Panc1 (cell line): ENCODE measurements at regions of chr11 and their contacts with region 1.

Region 1: GRCh38 chr11:74581954-74582547 is 10.3 kb upstream of the POLD3 start:
- DNase-seq: no peak
- ATAC-seq: peak; percentile 45; the same call in 1 of the 2 replicates
- H3K4me3 ChIP-seq: no peak overlapping the region
- H3K27ac ChIP-seq: no peak overlapping the region
- H3K4me1 ChIP-seq: no peaks in the 10 kb centered on the region
- H3K27me3 ChIP-seq: no peaks in the 10 kb centered on the region; the same call in 1 of the 2 replicates
- CTCF ChIP-seq: no peak

Region 2: DNA sequence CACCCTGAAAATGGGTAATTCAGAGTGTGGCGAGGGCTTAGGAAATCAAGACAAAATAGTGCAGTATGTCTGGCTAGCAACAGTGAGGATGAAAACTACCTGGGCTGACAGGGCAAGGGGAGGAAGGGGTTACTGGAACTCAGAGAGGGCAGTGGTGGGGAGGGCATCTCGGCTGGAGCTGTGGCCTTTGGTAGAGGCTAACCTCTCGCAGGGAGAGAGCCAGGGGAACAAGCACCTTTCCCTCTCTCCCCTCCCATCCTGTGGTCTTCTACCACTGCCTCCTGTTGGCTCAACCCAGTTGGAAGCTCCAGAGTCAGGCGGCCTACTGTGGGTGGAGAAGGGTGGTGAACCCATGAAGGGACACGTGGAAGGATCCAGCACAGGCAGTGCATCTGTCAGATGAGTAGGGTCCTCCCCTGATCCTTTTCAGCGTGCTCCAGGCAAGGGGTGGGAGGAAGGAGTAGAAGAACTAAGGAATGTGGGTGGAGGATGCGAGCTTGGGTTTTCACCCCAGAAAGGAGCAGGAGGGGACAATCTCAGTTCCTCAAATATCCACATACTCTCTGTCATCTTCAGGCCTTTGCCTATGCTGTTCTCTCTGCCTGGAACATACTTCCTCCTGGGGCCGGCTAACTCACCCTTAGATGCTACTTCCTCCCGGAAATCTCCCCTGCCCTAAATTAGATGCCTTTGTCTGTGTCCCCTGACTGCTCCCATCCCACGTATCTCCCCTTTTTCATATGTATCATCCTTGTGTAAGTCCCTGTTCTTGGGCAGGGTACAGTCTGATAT is 108.5 kb before region 1 on chr11:
- CTCF ChIA-PET with region 1: no interaction called
- POLR2A ChIA-PET with region 1: interaction called, 12 read pairs
- in situ Hi-C with region 1: no loop called
- intact Hi-C with region 1: no loop called
- DNase-seq: no peak
- ATAC-seq: no peak
- H3K4me3 ChIP-seq: no peak overlapping the region
- H3K27ac ChIP-seq: no peak overlapping the region
- H3K4me1 ChIP-seq: no peaks in the 10 kb centered on the region
- H3K27me3 ChIP-seq: peaks cover 2% of the 10 kb centered on the region
- CTCF ChIP-seq: no peak

Region 3: GRCh38 chr11:74620531-74620930 is 38.5 kb after region 1 on chr11:
- CTCF ChIA-PET with region 1: no interaction called
- POLR2A ChIA-PET with region 1: no interaction called
- in situ Hi-C with region 1: no loop called
- intact Hi-C with region 1: no loop called
- DNase-seq: no peak
- ATAC-seq: no peak
- H3K4me3 ChIP-seq: no peak overlapping the region
- H3K27ac ChIP-seq: no peak overlapping the region
- H3K4me1 ChIP-seq: no peaks in the 10 kb centered on the region
- H3K27me3 ChIP-seq: no peaks in the 10 kb centered on the region
- CTCF ChIP-seq: no peak

Region 4: GRCh38 chr11:74756571-74756970 is 174.5 kb after region 1 on chr11:
- CTCF ChIA-PET with region 1: no interaction called
- POLR2A ChIA-PET with region 1: no interaction called
- in situ Hi-C with region 1: no loop called
- intact Hi-C with region 1: no loop called
- DNase-seq: no peak
- ATAC-seq: no peak
- H3K4me3 ChIP-seq: no peak overlapping the region
- H3K27ac ChIP-seq: no peak overlapping the region
- H3K4me1 ChIP-seq: peaks cover 24% of the 10 kb centered on the region
- H3K27me3 ChIP-seq: no peaks in the 10 kb centered on the region
- CTCF ChIP-seq: no peak